Activated CD4-positive, alpha-beta T cell treated with anti-CD3 and anti-CD28 coated beads for 36 hours (primary cell): ENCODE measurements at regions of chr17 and their contacts with region 1.

Region 1: GRCh38 chr17:64262417-64263260 is at the start of gene TEX2:
- DNase-seq: peak; percentile 78
- ATAC-seq: peak; percentile 27
- H3K4me3 Mint-ChIP-seq: peak within 1 kb of the TSS; percentile 96
- H3K27ac Mint-ChIP-seq: peak within 1 kb of the TSS; percentile 92
- H3K4me1 Mint-ChIP-seq: peaks cover 36% of the 10 kb centered on the region
- H3K27me3 Mint-ChIP-seq: no peaks in the 10 kb centered on the region
- total RNA-seq, gene TEX2: 15.2 to 15.8 TPM

Region 2: DNA sequence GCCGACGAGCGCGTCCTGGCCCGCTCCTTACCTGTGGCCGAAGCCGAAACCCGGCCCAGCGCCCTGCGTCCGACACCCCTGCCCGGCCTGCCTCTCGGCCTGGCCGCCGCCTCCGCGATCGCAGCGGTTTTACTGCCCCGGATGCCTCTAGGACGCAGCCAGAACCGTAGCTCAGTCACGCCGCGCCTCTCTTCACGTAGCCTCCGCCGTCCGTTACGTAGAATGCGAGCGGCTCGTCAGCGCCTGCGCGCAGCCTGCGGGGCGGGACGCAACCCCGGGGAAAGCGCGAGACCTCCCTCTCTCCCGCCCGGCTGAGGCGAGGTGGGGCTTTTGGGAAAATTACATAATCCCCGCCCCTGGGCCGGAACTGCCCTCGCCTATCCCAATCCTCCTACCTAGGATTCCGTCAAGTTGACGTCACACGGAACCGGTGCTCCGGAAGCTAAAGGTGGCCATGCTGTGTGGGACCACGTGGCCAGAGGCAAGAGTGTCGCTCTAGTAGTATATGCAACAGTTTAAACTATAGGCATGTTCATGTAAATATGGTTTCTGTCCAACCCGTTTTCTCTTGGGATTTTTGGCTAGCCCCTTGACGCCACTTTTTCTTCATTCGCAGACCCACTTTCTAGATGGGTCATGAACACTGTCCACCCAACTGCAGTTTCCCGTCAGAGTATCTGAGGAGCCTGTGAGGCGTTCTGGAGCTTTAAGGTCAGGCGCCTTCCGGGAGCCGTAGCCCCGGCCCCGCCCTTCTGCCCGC is 489.1 kb before region 1 on chr17 and contains the start of gene CCDC47:
- CTCF ChIA-PET with region 1: no interaction called
- POLR2A ChIA-PET with region 1: no interaction called
- intact Hi-C with region 1: loop called in 1 of 2 experiments (anchors 10 kb)
- DNase-seq: peak; percentile 99
- ATAC-seq: peak; percentile 83
- H3K4me3 Mint-ChIP-seq: peak within 1 kb of the TSS; percentile 98
- H3K27ac Mint-ChIP-seq: peak within 1 kb of the TSS; percentile 97
- H3K4me1 Mint-ChIP-seq: peaks cover 57% of the 10 kb centered on the region
- H3K27me3 Mint-ChIP-seq: no peaks in the 10 kb centered on the region
- total RNA-seq, gene CCDC47: 76.9 to 82.3 TPM

Region 3: DNA sequence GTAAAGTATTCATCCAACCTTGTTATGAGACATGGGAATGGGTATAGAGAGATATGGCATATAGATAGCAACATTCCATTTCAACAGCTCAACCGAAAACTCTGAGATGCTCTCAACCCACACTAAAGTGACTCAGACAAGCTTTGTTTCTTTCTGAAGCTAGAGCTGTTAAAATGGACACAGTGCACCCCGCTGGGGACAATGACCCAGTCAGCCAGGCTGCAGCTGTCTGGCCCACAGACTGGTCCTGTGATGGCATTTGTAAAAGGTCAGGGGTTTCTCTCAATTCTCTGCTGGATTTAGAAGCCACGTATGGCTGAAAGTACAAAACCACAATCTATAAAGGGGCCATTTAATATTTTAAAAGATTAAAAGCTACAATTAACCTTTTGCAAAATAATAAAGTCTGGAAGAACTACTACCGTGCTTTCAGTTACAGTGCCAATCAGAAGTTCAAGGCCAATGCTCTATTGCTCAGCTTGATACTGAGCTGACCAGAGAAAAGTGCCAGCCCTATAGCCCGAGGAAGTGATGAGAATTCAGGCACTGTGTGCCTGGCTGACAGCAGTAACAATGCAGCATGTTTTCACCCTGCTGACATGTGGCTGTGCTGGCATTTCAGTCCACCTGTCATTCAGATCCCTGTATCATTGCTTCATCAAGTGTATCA is 59.8 kb before region 1 on chr17:
- CTCF ChIA-PET with region 1: no interaction called
- POLR2A ChIA-PET with region 1: no interaction called
- intact Hi-C with region 1: loop called in 1 of 2 experiments (anchors 1 kb)
- DNase-seq: peak; percentile 28
- ATAC-seq: peak; percentile 42
- H3K4me3 Mint-ChIP-seq: no peak overlapping the region
- H3K27ac Mint-ChIP-seq: no peak overlapping the region
- H3K4me1 Mint-ChIP-seq: peaks cover 42% of the 10 kb centered on the region
- H3K27me3 Mint-ChIP-seq: no peaks in the 10 kb centered on the region

Region 4: DNA sequence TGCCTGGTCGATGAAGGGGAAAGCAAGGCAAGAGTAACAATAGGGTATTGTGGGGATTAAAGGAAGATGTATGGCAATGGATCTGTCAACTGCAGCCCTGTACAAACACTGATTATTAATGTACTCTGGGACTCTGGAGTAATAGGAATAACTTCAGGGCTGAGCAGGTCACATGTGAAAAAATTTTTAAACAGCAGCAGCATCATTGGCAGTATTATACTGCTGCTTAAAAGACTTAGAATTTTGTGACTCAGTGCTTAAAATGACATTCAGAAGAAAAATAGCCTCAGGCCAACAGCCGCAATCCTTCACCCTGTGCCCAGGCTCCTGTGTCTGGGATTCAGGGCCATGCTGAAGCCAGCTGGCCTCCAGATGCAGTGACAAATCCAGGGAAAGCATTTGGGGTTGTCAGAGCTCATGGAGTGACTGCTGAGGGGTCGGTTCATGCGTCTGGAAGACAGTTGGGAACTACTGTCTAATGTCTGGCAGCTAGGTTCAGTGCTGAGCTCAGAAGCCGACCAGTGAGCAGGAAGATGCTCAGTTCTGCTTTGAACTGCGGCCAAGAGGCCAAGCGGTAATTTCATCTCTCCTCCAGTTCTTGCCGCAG is 21.8 kb before region 1 on chr17:
- CTCF ChIA-PET with region 1: interaction called, 4 read pairs
- POLR2A ChIA-PET with region 1: no interaction called
- intact Hi-C with region 1: loop called in 1 of 2 experiments (anchors 1 kb)
- DNase-seq: no peak
- ATAC-seq: no peak
- H3K4me3 Mint-ChIP-seq: no peak overlapping the region
- H3K27ac Mint-ChIP-seq: no peak overlapping the region
- H3K4me1 Mint-ChIP-seq: peaks cover 45% of the 10 kb centered on the region
- H3K27me3 Mint-ChIP-seq: no peaks in the 10 kb centered on the region

Region 5: DNA sequence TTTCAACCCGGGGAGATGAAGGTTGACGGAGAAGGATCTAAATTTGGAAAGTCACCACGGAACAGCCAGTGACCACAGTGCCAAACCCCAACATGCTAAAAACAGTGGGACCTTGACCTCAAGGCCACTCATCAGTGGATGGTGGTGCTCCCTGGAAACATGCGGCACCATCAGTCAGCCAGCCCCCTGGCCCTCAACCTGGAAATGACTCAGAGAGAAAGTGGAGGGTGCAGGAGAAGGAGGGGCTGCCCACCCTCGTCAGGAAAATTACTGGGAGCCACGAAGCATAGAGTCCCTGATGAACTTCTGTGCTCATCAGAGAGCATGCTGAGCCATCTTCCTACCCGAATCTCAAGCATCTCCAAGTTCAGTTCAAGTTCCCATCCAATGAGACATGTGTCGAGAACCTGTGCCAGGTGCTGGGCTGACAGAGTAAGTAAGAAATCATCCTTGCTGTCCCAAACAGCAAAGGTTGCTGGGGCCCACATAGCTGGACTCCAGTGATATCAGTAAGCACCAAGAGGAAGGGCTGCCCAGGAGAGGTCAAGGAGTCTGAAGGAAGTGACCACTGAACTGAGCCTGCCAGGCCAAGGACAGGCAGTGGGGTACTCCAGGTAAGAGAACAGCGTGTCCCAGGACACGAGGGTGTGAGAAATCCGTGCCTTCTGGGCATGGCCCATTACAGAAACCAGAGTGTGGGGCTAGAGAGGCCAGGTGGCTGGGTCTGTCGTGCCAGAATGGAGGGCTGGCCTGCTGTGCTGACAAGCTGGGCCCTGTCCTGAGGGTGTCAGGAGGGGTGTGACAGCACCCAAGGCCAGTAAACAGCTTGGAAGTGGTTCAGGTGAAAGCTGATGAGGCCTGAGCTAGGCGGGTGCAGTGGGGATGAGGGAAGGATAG is 122.8 kb after region 1 on chr17:
- CTCF ChIA-PET with region 1: no interaction called
- POLR2A ChIA-PET with region 1: no interaction called
- intact Hi-C with region 1: no loop called
- DNase-seq: peak; percentile 73
- ATAC-seq: peak; percentile 83
- H3K4me3 Mint-ChIP-seq: peak overlapping the region; percentile 29
- H3K27ac Mint-ChIP-seq: peak overlapping the region; percentile 77
- H3K4me1 Mint-ChIP-seq: peaks cover 46% of the 10 kb centered on the region
- H3K27me3 Mint-ChIP-seq: no peaks in the 10 kb centered on the region

Region 6: GRCh38 chr17:64661976-64662773 is 399.5 kb after region 1 on chr17 and contains the start of gene SMURF2:
- CTCF ChIA-PET with region 1: no interaction called
- POLR2A ChIA-PET with region 1: no interaction called
- intact Hi-C with region 1: loop called in 1 of 2 experiments (anchors 2 kb)
- DNase-seq: peak; percentile 89
- ATAC-seq: peak; percentile 82
- H3K4me3 Mint-ChIP-seq: peak within 1 kb of the TSS; percentile 98
- H3K27ac Mint-ChIP-seq: peak within 1 kb of the TSS; percentile 92
- H3K4me1 Mint-ChIP-seq: peaks cover 27% of the 10 kb centered on the region
- H3K27me3 Mint-ChIP-seq: no peaks in the 10 kb centered on the region
- total RNA-seq, gene SMURF2: 13.9 to 15.0 TPM